ENCODE measurements at regions of chr10 and their contacts with region 1.

Region 1: DNA sequence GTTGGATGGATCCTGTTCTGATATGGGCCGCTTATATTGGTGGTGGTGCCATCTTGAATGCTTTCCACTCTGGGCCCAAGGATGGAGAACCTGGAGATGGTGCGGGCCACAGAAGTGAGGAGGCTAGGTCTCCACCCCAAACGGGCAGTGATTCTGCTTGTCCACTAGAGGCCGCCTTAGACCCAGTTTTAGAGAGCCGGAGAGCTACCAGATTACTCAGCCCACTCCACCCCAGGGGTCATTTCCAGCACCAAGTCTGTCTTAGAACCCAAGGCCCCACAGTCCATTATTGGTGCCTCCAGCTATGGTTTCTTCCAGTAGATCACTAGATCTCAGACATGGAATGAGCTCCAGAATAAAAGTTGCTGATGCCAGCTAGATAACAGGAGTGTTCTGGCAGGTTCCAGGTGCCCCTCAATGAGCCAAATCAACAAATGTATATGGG is 11.8 kb upstream of the CAMK2G start:
- DNase-seq: peak; percentile 89 to 92 (median 90)
- ATAC-seq: peak; percentile 98
- H3K4me3 ChIP-seq: no peak overlapping the region
- H3K27ac ChIP-seq: no peak overlapping the region
- H3K4me1 ChIP-seq: peaks cover 17 to 20% of the 10 kb centered on the region in 2 experiments
- H3K27me3 ChIP-seq: no peaks in the 10 kb centered on the region
- CTCF ChIP-seq: peak; percentile 93 to 98 (median 97)
- EP300 ChIP-seq: peak; percentile 21; the same call in 1 of the 2 replicates
- POLR2A ChIP-seq: no peak
- RAD21 ChIP-seq: peak; percentile 99

Region 2: DNA sequence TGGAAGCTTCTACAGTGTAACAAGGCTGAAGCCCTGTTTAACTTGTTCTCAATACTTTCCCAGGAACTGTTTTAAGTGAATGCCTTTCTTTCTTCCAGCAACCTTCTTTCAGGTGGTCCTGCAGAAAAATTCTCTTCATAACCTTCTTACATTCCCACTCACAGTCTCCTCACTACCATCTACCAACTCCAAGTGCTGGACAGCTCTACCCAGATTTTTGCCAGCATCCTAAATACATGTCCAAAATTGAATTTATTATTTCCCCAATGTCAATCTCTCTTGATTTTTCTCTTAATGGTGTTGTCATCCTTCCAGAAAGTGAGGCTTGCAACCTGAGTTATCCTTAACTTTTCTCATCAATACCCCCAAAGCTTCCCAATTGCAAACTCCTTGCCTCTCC is 575.6 kb before region 1 on chr10:
- CTCF ChIA-PET with region 1: no interaction called
- POLR2A ChIA-PET with region 1: no interaction called
- in situ Hi-C with region 1: no loop called
- intact Hi-C with region 1: no loop called
- DNase-seq: no peak
- ATAC-seq: no peak
- H3K4me3 ChIP-seq: no peak overlapping the region
- H3K27ac ChIP-seq: no peak overlapping the region
- H3K4me1 ChIP-seq: no peaks in the 10 kb centered on the region
- H3K27me3 ChIP-seq: no peaks in the 10 kb centered on the region
- CTCF ChIP-seq: no peak
- EP300 ChIP-seq: no peak
- POLR2A ChIP-seq: no peak
- RAD21 ChIP-seq: no peak

Region 3: DNA sequence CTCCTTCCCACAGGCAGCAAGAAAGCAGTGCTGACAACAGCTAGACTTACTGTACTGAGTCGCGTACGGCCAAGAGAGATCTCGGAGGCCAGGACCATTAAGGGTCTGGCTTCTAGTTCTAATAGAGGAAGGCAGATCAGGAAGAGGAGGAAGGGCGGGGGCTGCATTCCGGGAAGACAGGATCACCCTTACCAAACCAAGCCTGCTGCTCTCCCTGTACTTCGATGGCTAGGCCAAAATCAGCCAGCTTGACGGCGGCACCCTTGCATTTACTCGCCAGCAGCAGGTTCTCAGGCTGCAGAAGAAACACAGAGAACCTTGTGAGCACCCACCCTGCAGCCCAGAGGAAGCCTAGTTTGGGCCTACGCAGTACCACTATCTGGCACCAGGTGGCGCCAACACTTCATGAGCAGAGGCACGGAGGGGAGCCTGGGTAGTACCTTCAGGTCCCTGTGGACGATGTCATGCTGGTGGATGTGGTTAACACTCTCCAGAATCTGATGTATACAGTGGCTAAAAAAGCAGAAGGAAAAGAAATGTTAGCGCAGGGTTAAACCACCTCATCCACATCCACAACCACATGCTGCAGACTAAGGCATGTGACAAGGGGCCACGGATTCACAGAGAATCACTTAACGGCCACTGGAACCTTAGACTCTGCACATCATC is 37.2 kb before region 1 on chr10:
- CTCF ChIA-PET with region 1: interaction called, 12 read pairs
- POLR2A ChIA-PET with region 1: interaction called, 4 read pairs
- in situ Hi-C with region 1: loop called (anchors 5 kb)
- intact Hi-C with region 1: no loop called
- DNase-seq: peak; percentile 90 to 95 (median 92)
- ATAC-seq: peak; percentile 98
- H3K4me3 ChIP-seq: no peak overlapping the region
- H3K27ac ChIP-seq: no peak overlapping the region
- H3K4me1 ChIP-seq: peaks cover 0 to 11% of the 10 kb centered on the region in 2 experiments; a peak in 2 of 5 replicates
- H3K27me3 ChIP-seq: no peaks in the 10 kb centered on the region
- CTCF ChIP-seq: peak; percentile 97 to 99 (median 99)
- EP300 ChIP-seq: no peak
- POLR2A ChIP-seq: no peak
- RAD21 ChIP-seq: peak; percentile 99

Region 4: DNA sequence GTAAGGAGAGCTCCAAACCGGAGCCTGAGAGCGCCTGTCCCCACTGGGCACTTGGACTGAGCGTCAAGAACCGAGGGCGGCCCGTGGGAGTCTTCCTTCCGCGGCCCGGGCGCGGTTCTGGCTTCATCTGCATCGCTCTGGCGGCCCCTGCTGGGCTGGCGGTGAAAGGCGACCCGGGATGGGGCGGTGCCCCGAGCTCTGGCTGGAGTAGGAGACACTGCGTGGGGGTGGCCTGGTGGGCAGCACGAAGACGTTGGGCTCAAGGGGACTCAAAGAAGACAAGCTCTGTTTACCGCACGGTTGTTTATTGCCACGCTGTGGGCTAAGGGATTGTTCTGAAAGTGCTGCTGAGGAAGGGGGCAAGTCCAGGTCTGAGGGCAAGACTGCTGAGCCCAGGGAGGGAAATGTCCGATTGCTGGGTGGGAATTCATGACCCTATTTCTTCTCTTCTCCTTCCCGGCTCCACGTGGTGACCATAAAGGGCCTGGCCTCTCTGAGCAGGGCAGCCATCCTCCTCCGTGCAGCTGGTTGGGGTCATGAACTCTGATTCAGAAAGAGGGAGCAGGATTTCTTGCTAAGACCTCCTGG is 54.6 kb after region 1 on chr10:
- CTCF ChIA-PET with region 1: interaction called, 39 read pairs
- POLR2A ChIA-PET with region 1: interaction called, 7 read pairs
- in situ Hi-C with region 1: loop called (anchors 10 kb)
- intact Hi-C with region 1: loop called (anchors 1 kb)
- DNase-seq: peak; percentile 93 to 97 (median 96)
- ATAC-seq: peak; percentile 99
- H3K4me3 ChIP-seq: peak overlapping the region; percentile 2; the same call in 1 of the 2 replicates
- H3K27ac ChIP-seq: peak overlapping the region; percentile 51
- H3K4me1 ChIP-seq: peaks cover 18% of the 10 kb centered on the region in 2 experiments; a peak in 4 of 5 replicates
- H3K27me3 ChIP-seq: no peaks in the 10 kb centered on the region
- CTCF ChIP-seq: peak; percentile 96 to 99 (median 97)
- EP300 ChIP-seq: 0 out of 2 replicates have a peak, but pooled peaks have one; percentile 12
- POLR2A ChIP-seq: peak; percentile 41; the same call in 1 of the 2 replicates
- RAD21 ChIP-seq: peak; percentile 99 to 100

Region 5: DNA sequence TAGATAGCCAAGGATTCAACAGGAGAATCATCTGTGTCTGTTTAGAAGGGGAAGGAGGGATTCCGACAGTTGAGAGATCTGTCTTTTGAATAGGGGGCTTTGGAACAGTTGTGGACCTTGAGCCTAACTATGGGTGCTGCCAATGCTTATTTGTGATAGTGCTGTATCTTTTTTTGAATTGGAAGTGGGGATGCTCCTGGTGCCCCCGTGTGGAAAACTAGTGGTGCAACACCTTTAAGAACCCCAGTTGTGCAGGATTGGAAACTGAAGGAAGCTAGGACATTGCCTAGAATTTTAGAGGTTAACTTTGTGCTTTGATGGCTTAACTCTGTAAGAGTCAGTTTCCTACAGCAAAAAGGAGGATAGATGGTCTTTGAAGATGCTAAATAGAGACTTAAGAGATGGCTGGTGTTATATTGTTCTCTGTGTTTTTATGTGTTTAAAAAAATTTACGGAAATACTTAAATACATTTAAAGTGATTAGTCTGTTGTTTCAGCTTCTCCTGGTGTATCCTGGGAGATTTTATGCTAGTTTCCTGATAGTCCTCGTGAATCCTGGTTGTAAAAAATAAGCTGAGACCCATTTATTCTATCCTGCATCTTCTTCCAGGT is 195.2 kb after region 1 on chr10:
- CTCF ChIA-PET with region 1: interaction called, 15 read pairs
- POLR2A ChIA-PET with region 1: interaction called, 5 read pairs
- in situ Hi-C with region 1: loop called (anchors 5 kb)
- intact Hi-C with region 1: loop called (anchors 1 kb)
- DNase-seq: peak; percentile 55 to 80 (median 68)
- ATAC-seq: peak; percentile 92
- H3K4me3 ChIP-seq: no peak overlapping the region
- H3K27ac ChIP-seq: no peak overlapping the region
- H3K4me1 ChIP-seq: peaks cover 0 to 15% of the 10 kb centered on the region in 2 experiments; a peak in 1 of 5 replicates
- H3K27me3 ChIP-seq: no peaks in the 10 kb centered on the region
- CTCF ChIP-seq: peak; percentile 79 to 85 (median 82)
- EP300 ChIP-seq: no peak
- POLR2A ChIP-seq: no peak
- RAD21 ChIP-seq: peak; percentile 84 to 86

Region 6: DNA sequence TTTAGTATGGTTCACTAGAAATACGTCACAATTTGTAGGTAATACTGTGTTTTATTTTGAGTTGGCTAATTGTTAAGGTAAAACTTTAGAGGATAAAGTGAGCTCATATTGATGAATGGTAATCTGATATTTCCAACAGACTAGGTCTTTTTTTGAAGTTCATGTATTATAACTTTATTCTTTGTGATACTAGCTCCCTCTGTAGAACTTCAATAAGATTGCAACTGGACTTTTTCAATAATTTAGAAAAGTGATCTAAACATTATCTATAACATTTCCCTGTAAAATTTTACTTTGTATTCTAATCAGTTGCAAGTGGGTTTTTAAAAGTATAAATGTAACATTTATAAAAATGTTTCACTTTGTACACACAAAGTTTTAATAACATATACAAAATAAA is 348.5 kb after region 1 on chr10:
- CTCF ChIA-PET with region 1: interaction called, 12 read pairs
- POLR2A ChIA-PET with region 1: interaction called, 3 read pairs
- in situ Hi-C with region 1: loop called (anchors 10 kb)
- intact Hi-C with region 1: loop called (anchors 5 kb)
- DNase-seq: no peak
- ATAC-seq: no peak
- H3K4me3 ChIP-seq: no peak overlapping the region
- H3K27ac ChIP-seq: no peak overlapping the region
- H3K4me1 ChIP-seq: peaks cover 5 to 14% of the 10 kb centered on the region in 2 experiments; a peak in 4 of 5 replicates
- H3K27me3 ChIP-seq: no peaks in the 10 kb centered on the region
- CTCF ChIP-seq: peak in 1 of 3 experiments; percentile 64; a peak in 2 of 6 replicates
- EP300 ChIP-seq: no peak
- POLR2A ChIP-seq: no peak
- RAD21 ChIP-seq: peak; percentile 47 to 73